Activated T-helper 1 cell treated with anti-CD3 and anti-CD28 coated beads, Interleukin-12 subunit alpha, Interleukin-12 subunit beta, Interleukin-2, Interleukin-4 antibody, amounts not matched to agents 30 ng/mL and 10 ng/mL and 1 ng/mL, durations not matched to agents 14 hours and 24 hours and 36 hours (primary cell): ENCODE measurements at regions of chr5 and their contacts with region 1.

Region 1: DNA sequence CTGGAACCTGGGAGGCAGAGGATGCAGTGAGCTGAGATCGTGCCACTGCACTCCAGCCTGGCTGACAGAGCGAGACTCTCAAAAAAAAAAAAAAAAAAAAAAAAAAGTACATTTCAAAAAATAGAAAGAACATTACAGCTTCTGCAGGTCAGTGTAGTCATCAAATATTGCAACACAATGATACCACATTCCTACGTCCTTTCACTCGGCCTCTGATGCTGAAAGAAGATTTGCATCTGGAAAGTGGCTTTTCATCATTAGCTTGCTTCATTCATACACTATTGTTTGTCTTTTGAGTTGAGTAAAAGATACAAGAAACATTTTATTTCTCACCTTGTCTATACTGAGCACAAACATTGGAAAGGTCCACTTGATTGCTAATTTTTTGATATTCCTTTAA is 59.6 kb upstream of the CPLANE1 start:
- DNase-seq: no peak
- H3K4me3 Mint-ChIP-seq: no peak overlapping the region
- H3K27ac Mint-ChIP-seq: no peak overlapping the region
- H3K4me1 Mint-ChIP-seq: no peaks in the 10 kb centered on the region
- H3K27me3 Mint-ChIP-seq: no peaks in the 10 kb centered on the region

Region 2: GRCh38 chr5:37045703-37046102 is 263.1 kb before region 1 on chr5:
- intact Hi-C with region 1: loop called (anchors 5 kb)
- DNase-seq: no peak
- H3K4me3 Mint-ChIP-seq: no peak overlapping the region
- H3K27ac Mint-ChIP-seq: no peak overlapping the region
- H3K4me1 Mint-ChIP-seq: no peaks in the 10 kb centered on the region
- H3K27me3 Mint-ChIP-seq: no peaks in the 10 kb centered on the region

Region 3: DNA sequence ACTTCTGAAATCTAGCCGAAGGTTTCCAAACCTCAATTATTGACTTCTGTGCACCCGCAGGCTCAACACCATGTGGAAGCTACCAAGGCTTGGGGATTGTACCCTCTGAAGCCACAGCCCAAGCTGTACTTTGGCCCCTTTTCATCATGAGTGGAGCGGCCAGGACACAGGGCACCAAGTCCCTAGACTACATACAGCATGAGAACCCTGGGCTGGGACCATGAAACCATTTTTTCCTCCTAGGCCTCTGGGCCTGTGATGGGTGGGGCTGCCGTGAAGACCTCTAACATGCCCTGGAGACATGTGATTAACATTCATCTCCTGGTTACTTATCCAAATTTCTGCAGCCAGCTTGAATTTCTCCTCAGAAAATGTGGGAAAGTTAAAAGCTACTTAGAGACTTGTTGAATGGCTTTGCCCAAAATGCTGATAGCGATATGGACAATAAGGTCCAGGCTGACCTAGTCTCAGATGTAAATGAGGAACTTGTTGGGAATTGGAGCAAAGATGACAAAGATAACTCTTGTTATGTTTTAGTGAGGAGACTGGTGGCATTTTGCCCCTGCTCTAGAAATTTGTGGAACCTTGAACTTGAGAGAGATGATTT is 25.5 kb before region 1 on chr5:
- intact Hi-C with region 1: no loop called
- DNase-seq: no peak
- H3K4me3 Mint-ChIP-seq: no peak overlapping the region
- H3K27ac Mint-ChIP-seq: no peak overlapping the region
- H3K4me1 Mint-ChIP-seq: no peaks in the 10 kb centered on the region
- H3K27me3 Mint-ChIP-seq: no peaks in the 10 kb centered on the region